Common myeloid progenitor, CD34-positive (primary cell): ENCODE measurements at regions of chr1 and their contacts with region 1.

Region 1: GRCh38 chr1:46522184-46522968 is 29.1 kb downstream of the KNCN start:
- DNase-seq: peak; percentile 59 to 90 (median 78)
- H3K4me3 ChIP-seq: peak overlapping the region in 2 of 7 experiments; percentile 10 to 28
- H3K27ac ChIP-seq: peak overlapping the region in 1 of 2 experiments; percentile 73
- H3K4me1 ChIP-seq: peaks cover 0 to 18% (median 10%) of the 10 kb centered on the region in 4 experiments
- H3K27me3 ChIP-seq: peaks cover 0 to 30% (median 17%) of the 10 kb centered on the region in 5 experiments

Region 2: DNA sequence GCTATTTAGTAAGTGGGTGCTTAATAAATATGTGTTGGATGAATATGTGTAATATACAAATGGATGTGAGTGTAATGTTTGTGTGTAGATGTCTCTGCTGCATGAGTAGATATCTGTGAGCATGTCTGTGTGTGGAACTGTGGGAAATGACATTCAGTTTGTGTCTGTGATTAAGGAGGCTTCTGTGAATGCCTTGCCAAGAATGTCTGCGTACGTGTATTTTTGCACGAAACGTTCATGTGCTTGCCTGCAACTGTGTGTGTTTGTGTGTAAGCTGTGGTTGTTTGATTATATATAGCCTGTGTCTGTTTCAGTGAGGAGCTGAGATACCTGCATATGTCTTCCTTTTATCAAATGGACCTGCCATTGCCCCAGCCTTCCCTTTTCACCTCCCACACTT is 19.0 kb before region 1 on chr1:
- CTCF ChIA-PET with region 1: interaction called, 24 read pairs
- POLR2A ChIA-PET with region 1: no interaction called
- DNase-seq: no peak
- H3K4me3 ChIP-seq: no peak overlapping the region
- H3K27ac ChIP-seq: no peak overlapping the region
- H3K4me1 ChIP-seq: no peaks in the 10 kb centered on the region
- H3K27me3 ChIP-seq: peaks cover 4 to 19% (median 7%) of the 10 kb centered on the region in 5 experiments